SK-N-SH (cell line): ENCODE measurements at regions of chr6 and their contacts with region 1.

Region 1: GRCh38 chr6:30556066-30556905 is at the start of gene GNL1:
- DNase-seq: peak; percentile 92
- H3K4me3 ChIP-seq: peak within 1 kb of the TSS; percentile 93 to 99
- H3K27ac ChIP-seq: peak within 1 kb of the TSS; percentile 90 to 99
- H3K4me1 ChIP-seq: peaks cover 15 to 17% of the 10 kb centered on the region in 2 experiments
- H3K27me3 ChIP-seq: no peaks in the 10 kb centered on the region
- CTCF ChIP-seq: no peak
- EP300 ChIP-seq: no peak
- RAD21 ChIP-seq: no peak
- polyA plus RNA-seq, gene GNL1: 36.4 and 43.3 TPM in 2 replicates

Region 2: DNA sequence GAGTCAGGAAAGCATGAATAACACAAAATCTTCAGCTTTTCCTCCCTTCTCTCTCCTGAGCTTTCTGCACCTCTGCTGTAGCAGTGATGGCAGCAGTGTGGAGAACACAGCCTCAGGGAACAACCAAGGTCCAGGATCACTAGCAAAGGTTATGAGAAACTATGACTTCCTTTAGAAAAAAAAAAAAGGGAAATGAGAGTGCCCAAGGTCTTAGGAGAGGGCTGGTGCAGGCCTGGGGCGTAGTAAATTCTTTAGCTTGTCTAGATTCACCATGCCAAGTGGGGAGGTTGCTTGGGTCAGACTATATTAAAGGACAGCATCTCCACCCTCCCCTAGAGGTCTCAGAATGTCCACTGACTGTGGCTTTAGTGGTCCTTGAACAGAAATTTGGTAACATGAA is 535.7 kb before region 1 on chr6:
- CTCF ChIA-PET with region 1: no interaction called
- POLR2A ChIA-PET with region 1: no interaction called
- DNase-seq: no peak
- H3K4me3 ChIP-seq: no peak overlapping the region
- H3K27ac ChIP-seq: no peak overlapping the region
- H3K4me1 ChIP-seq: no peaks in the 10 kb centered on the region
- H3K27me3 ChIP-seq: no peaks in the 10 kb centered on the region
- CTCF ChIP-seq: no peak
- EP300 ChIP-seq: no peak
- RAD21 ChIP-seq: no peak

Region 3: DNA sequence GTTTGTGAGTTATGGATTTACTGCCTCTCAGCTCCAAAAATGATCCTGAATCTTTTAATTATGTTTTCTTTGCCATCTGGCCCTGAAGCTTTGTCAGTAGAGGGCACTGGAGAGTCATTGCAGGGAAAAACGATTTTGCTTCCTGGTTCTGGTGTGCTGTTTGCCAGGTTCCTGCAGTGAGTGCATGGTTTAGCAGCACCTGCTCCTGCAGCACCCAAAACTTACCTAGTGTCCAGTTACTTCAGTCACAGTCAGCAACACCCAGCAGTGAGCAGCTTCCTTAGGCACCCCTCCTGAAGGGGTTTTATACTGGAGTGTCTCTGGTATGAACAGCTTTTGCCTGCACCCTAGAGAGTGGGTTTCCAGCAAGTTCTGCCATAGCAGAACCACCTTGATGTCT is 337.0 kb before region 1 on chr6:
- CTCF ChIA-PET with region 1: no interaction called
- POLR2A ChIA-PET with region 1: no interaction called
- DNase-seq: peak; percentile 72
- H3K4me3 ChIP-seq: peak overlapping the region in 1 of 2 experiments; percentile 35; a peak in 1 of 4 replicates
- H3K27ac ChIP-seq: no peak overlapping the region
- H3K4me1 ChIP-seq: peaks cover 0 to 6% of the 10 kb centered on the region in 2 experiments; a peak in 1 of 4 replicates
- H3K27me3 ChIP-seq: no peaks in the 10 kb centered on the region
- CTCF ChIP-seq: peak; percentile 90
- EP300 ChIP-seq: no peak
- RAD21 ChIP-seq: peak; percentile 84

Region 4: GRCh38 chr6:30500421-30501355 is 55.6 kb before region 1 on chr6:
- CTCF ChIA-PET with region 1: no interaction called
- POLR2A ChIA-PET with region 1: no interaction called
- DNase-seq: no peak
- H3K4me3 ChIP-seq: no peak overlapping the region
- H3K27ac ChIP-seq: no peak overlapping the region
- H3K4me1 ChIP-seq: peaks cover 0 to 14% of the 10 kb centered on the region in 2 experiments; a peak in 1 of 4 replicates
- H3K27me3 ChIP-seq: no peaks in the 10 kb centered on the region
- CTCF ChIP-seq: no peak
- EP300 ChIP-seq: no peak
- RAD21 ChIP-seq: no peak

Region 5: GRCh38 chr6:30571075-30571768 is 14.9 kb after region 1 on chr6 and contains the start of gene ABCF1:
- CTCF ChIA-PET with region 1: interaction called, 4 read pairs
- POLR2A ChIA-PET with region 1: interaction called, 16 read pairs
- DNase-seq: peak; percentile 97
- H3K4me3 ChIP-seq: peak within 1 kb of the TSS; percentile 61 to 81
- H3K27ac ChIP-seq: peak within 1 kb of the TSS; percentile 95 to 97
- H3K4me1 ChIP-seq: peaks cover 12 to 21% of the 10 kb centered on the region in 2 experiments; a peak in 3 of 4 replicates
- H3K27me3 ChIP-seq: no peaks in the 10 kb centered on the region
- CTCF ChIP-seq: no peak
- EP300 ChIP-seq: no peak; a peak in 2 of 4 replicates
- RAD21 ChIP-seq: no peak
- polyA plus RNA-seq, gene ABCF1: 42.5 and 53.4 TPM in 2 replicates

Region 6: DNA sequence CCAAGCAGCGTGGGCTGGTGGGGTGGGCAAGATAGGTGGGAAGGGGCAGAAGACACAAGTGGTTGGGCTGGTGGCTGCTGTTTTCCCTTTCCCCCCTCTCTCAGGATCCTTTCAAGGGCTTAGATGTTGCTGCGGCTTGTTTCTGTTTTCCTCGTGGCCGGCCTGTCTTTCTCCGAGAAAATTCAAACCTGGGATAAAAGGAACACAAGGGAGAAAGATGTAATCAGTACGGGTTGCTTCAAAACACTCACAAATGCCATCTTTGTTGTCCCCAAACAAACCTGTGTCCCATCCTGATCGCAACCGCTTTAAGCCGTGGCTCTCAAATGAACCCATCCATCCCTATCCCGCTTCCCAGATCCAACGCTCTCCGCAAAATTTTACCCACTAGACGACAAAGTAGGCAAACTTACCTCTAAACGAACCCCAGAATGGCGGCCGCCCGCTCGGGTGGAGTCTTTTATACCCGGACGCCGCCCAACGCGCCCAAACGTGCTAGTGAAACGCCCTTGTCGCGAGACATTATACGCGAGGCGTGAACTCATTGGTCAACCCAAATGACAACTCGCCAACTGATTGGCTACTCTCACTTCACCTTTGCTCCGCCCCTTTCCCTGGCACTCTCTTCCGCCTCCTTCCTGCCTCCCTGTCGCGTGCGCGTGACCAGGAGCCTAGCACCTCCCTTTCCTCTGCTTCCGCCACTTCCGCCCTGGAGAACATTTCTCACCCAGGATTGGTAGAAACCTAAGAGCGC is 60.7 kb after region 1 on chr6 and contains the start of gene PPP1R10:
- CTCF ChIA-PET with region 1: no interaction called
- POLR2A ChIA-PET with region 1: interaction called, 22 read pairs
- DNase-seq: peak; percentile 82
- H3K4me3 ChIP-seq: peak within 1 kb of the TSS; percentile 78 to 94
- H3K27ac ChIP-seq: peak within 1 kb of the TSS; percentile 96 to 98
- H3K4me1 ChIP-seq: peaks cover 21 to 32% of the 10 kb centered on the region in 2 experiments
- H3K27me3 ChIP-seq: no peaks in the 10 kb centered on the region
- CTCF ChIP-seq: no peak
- EP300 ChIP-seq: no peak
- RAD21 ChIP-seq: no peak
- polyA plus RNA-seq, gene PPP1R10: 16.8 and 22.1 TPM in 2 replicates

Region 7: GRCh38 chr6:30646458-30647241 is 90.4 kb after region 1 on chr6 and contains the start of gene C6orf136:
- CTCF ChIA-PET with region 1: no interaction called
- POLR2A ChIA-PET with region 1: no interaction called
- DNase-seq: peak; percentile 97
- H3K4me3 ChIP-seq: peak within 1 kb of the TSS; percentile 84
- H3K27ac ChIP-seq: peak within 1 kb of the TSS; percentile 77 to 94
- H3K4me1 ChIP-seq: peaks cover 0 to 6% of the 10 kb centered on the region in 2 experiments; a peak in 2 of 4 replicates
- H3K27me3 ChIP-seq: no peaks in the 10 kb centered on the region
- CTCF ChIP-seq: no peak
- EP300 ChIP-seq: no peak
- RAD21 ChIP-seq: no peak
- polyA plus RNA-seq, gene C6orf136: 11.7 and 14.3 TPM in 2 replicates